Endothelial cell of umbilical vein (primary cell): ENCODE measurements at regions of chr4 and their contacts with region 1.

Region 1: GRCh38 chr4:124902001-124902672 is 189.6 kb upstream of the ANKRD50 start:
- DNase-seq: no peak
- H3K4me3 ChIP-seq: no peak overlapping the region
- H3K27ac ChIP-seq: no peak overlapping the region
- H3K4me1 ChIP-seq: peaks cover 5% of the 10 kb centered on the region
- H3K27me3 ChIP-seq: no peaks in the 10 kb centered on the region
- CTCF ChIP-seq: no peak
- POLR2A ChIP-seq: no peak

Region 2: DNA sequence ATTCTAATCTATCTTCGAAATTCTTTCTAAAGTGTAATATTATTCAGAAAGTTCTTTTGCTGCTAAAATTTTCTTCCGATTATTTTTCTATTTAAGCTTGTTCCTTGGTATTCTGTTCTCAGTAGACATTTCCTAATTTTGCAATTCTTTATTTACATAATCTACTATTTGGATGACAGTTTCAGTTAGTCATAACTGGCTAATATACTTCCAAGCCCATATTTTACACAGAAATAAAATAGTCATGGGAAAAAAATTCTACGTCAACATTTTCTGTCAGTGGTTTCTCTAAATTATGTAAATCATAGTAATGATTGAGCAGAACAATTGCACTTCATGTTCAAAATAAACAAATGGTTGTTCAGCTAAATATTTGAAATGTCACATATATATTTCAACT is 11.6 kb before region 1 on chr4:
- CTCF ChIA-PET with region 1: interaction called, 10 read pairs
- POLR2A ChIA-PET with region 1: no interaction called
- dilution Hi-C with region 1: no loop called
- intact Hi-C with region 1: no loop called
- DNase-seq: no peak
- H3K4me3 ChIP-seq: no peak overlapping the region
- H3K27ac ChIP-seq: no peak overlapping the region
- H3K4me1 ChIP-seq: no peaks in the 10 kb centered on the region
- H3K27me3 ChIP-seq: no peaks in the 10 kb centered on the region
- CTCF ChIP-seq: no peak
- POLR2A ChIP-seq: no peak

Region 3: DNA sequence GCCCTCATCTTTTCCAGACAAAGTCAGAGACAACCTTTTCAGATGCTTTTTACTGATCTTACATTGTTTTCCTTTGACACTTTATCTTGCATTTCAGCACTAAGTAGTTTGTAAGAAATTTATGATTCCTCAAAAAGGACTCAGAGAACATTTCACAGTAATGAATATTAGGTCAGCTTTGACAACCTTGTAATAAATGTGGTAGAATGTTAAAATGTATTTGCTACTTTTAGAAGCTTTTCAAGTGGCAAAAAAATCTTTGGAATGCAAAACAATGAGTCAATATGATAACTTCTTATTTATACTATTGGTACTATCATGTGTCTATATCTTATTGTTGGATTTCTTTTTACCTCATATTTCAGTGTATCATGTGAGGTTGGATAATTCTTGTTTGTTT is 266.4 kb after region 1 on chr4:
- CTCF ChIA-PET with region 1: no interaction called
- POLR2A ChIA-PET with region 1: no interaction called
- dilution Hi-C with region 1: no loop called
- intact Hi-C with region 1: no loop called
- DNase-seq: no peak
- H3K4me3 ChIP-seq: no peak overlapping the region
- H3K27ac ChIP-seq: no peak overlapping the region
- H3K4me1 ChIP-seq: no peaks in the 10 kb centered on the region
- H3K27me3 ChIP-seq: no peaks in the 10 kb centered on the region
- CTCF ChIP-seq: no peak
- POLR2A ChIP-seq: no peak